Caco-2 (cell line): ENCODE measurements at regions of chr22 and their contacts with region 1.

Region 1: GRCh38 chr22:37792494-37792893 is 15.2 kb upstream of the GCAT start:
- DNase-seq: no peak
- H3K4me3 ChIP-seq: no peak overlapping the region
- H3K4me3 Mint-ChIP-seq: no peak overlapping the region
- H3K27ac Mint-ChIP-seq: no peak overlapping the region
- H3K4me1 ChIP-seq: peaks cover 10% of the 10 kb centered on the region
- H3K4me1 Mint-ChIP-seq: no peaks in the 10 kb centered on the region
- H3K27me3 ChIP-seq: no peaks in the 10 kb centered on the region
- H3K27me3 Mint-ChIP-seq: no peaks in the 10 kb centered on the region
- CTCF ChIP-seq: no peak

Region 2: GRCh38 chr22:37623075-37624016 is 169.1 kb before region 1 on chr22:
- CTCF ChIA-PET with region 1: no interaction called
- POLR2A ChIA-PET with region 1: no interaction called
- intact Hi-C with region 1: loop called (anchors 5 kb)
- DNase-seq: peak; percentile 65 to 78
- H3K4me3 ChIP-seq: no peak overlapping the region
- H3K4me3 Mint-ChIP-seq: no peak overlapping the region
- H3K27ac Mint-ChIP-seq: no peak overlapping the region
- H3K4me1 ChIP-seq: no peaks in the 10 kb centered on the region
- H3K4me1 Mint-ChIP-seq: no peaks in the 10 kb centered on the region
- H3K27me3 ChIP-seq: no peaks in the 10 kb centered on the region
- H3K27me3 Mint-ChIP-seq: no peaks in the 10 kb centered on the region
- CTCF ChIP-seq: peak; percentile 88

Region 3: GRCh38 chr22:37658133-37659065 is 134.1 kb before region 1 on chr22 and contains the start of gene PDXP:
- CTCF ChIA-PET with region 1: interaction called, 4 read pairs
- POLR2A ChIA-PET with region 1: no interaction called
- intact Hi-C with region 1: loop called (anchors 5 kb)
- DNase-seq: peak; percentile 98 to 99
- H3K4me3 ChIP-seq: peak within 1 kb of the TSS; percentile 98
- H3K4me3 Mint-ChIP-seq: peak within 1 kb of the TSS; percentile 89
- H3K27ac Mint-ChIP-seq: peak within 1 kb of the TSS; percentile 84
- H3K4me1 ChIP-seq: peaks cover 18% of the 10 kb centered on the region
- H3K4me1 Mint-ChIP-seq: peaks cover 19% of the 10 kb centered on the region
- H3K27me3 ChIP-seq: no peaks in the 10 kb centered on the region
- H3K27me3 Mint-ChIP-seq: no peaks in the 10 kb centered on the region
- CTCF ChIP-seq: no peak
- total RNA-seq, gene PDXP: 24.1 and 24.5 TPM in 2 replicates

Region 4: GRCh38 chr22:37734964-37735451 is 57.5 kb before region 1 on chr22:
- CTCF ChIA-PET with region 1: interaction called, 5 read pairs
- POLR2A ChIA-PET with region 1: no interaction called
- intact Hi-C with region 1: loop called (anchors 5 kb)
- DNase-seq: peak; percentile 75 to 77
- H3K4me3 ChIP-seq: no peak overlapping the region
- H3K4me3 Mint-ChIP-seq: no peak overlapping the region
- H3K27ac Mint-ChIP-seq: no peak overlapping the region
- H3K4me1 ChIP-seq: peaks cover 35% of the 10 kb centered on the region
- H3K4me1 Mint-ChIP-seq: peaks cover 13% of the 10 kb centered on the region
- H3K27me3 ChIP-seq: no peaks in the 10 kb centered on the region
- H3K27me3 Mint-ChIP-seq: no peaks in the 10 kb centered on the region
- CTCF ChIP-seq: peak; percentile 44 to 71

Region 5: DNA sequence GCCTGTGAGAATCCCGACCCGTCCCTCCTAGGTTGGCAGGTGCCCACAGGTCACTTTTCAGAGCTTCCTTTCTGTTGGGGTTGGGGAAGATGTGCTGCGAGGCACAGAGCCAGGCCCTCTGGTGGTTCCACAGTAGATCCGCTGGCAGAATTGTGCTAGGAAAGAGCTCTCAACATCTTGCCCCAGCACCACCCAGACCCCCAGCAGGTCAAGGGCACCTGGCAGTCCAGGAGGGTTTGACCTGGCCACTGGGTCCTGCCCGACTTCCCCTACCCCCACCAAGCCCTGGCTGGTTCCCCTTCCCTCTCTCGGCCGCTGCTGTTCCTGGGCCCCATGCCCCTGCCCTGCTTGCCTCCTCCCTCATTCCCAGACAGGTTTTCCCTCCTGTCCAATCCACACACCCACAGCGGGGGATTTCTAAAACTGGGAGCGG is 11.0 kb before region 1 on chr22:
- CTCF ChIA-PET with region 1: no interaction called
- POLR2A ChIA-PET with region 1: no interaction called
- intact Hi-C with region 1: no loop called
- DNase-seq: no peak
- H3K4me3 ChIP-seq: no peak overlapping the region
- H3K4me3 Mint-ChIP-seq: no peak overlapping the region
- H3K27ac Mint-ChIP-seq: no peak overlapping the region
- H3K4me1 ChIP-seq: peaks cover 24% of the 10 kb centered on the region
- H3K4me1 Mint-ChIP-seq: peaks cover 20% of the 10 kb centered on the region
- H3K27me3 ChIP-seq: no peaks in the 10 kb centered on the region
- H3K27me3 Mint-ChIP-seq: no peaks in the 10 kb centered on the region
- CTCF ChIP-seq: peak; percentile 15 to 17